ENCODE measurements at regions of chr9 and their contacts with region 1.

Region 1: GRCh38 chr9:38392235-38393127 is at the start of gene ALDH1B1:
- DNase-seq: peak; percentile 18 to 83 (median 35)
- ATAC-seq: peak; percentile 97
- H3K4me3 ChIP-seq: peak within 1 kb of the TSS; percentile 80
- H3K4me3 Mint-ChIP-seq: peak within 1 kb of the TSS; percentile 85 to 98 (median 93)
- H3K27ac ChIP-seq: peak within 1 kb of the TSS; percentile 59
- H3K27ac Mint-ChIP-seq: peak within 1 kb of the TSS; percentile 57 to 91 (median 87)
- H3K4me1 ChIP-seq: peaks cover 7% of the 10 kb centered on the region in 2 donors
- H3K4me1 Mint-ChIP-seq: peaks cover 12 to 26% (median 17%) of the 10 kb centered on the region in 7 donors
- H3K27me3 ChIP-seq: no peaks in the 10 kb centered on the region
- H3K27me3 Mint-ChIP-seq: peaks cover 0 to 23% (median 0%) of the 10 kb centered on the region in 5 donors
- total RNA-seq, gene ALDH1B1: 1.9 to 13.4 (median 3.8) TPM

Region 2: GRCh38 chr9:38227061-38227540 is 165.4 kb before region 1 on chr9:
- CTCF ChIA-PET with region 1: no interaction called
- POLR2A ChIA-PET with region 1: no interaction called
- intact Hi-C with region 1: loop called in 1 of 2 experiments (anchors 2 kb)
- DNase-seq: peak; percentile 33 to 82 (median 73)
- ATAC-seq: peak; percentile 84
- H3K4me3 ChIP-seq: peak overlapping the region; percentile 49
- H3K4me3 Mint-ChIP-seq: peak overlapping the region; percentile 76 to 90 (median 86)
- H3K27ac ChIP-seq: no peak overlapping the region
- H3K27ac Mint-ChIP-seq: peak overlapping the region in 8 of 9 donors; percentile 10 to 92 (median 58)
- H3K4me1 ChIP-seq: peaks cover 0 to 13% of the 10 kb centered on the region in 2 donors
- H3K4me1 Mint-ChIP-seq: peaks cover 16 to 30% (median 24%) of the 10 kb centered on the region in 7 donors
- H3K27me3 ChIP-seq: no peaks in the 10 kb centered on the region
- H3K27me3 Mint-ChIP-seq: peaks cover 0 to 17% (median under 1%) of the 10 kb centered on the region in 5 donors

Region 3: GRCh38 chr9:38339087-38339486 is 53.4 kb before region 1 on chr9:
- CTCF ChIA-PET with region 1: no interaction called
- POLR2A ChIA-PET with region 1: no interaction called
- intact Hi-C with region 1: loop called in 1 of 2 experiments (anchors 10 kb)
- DNase-seq: no peak
- ATAC-seq: peak; percentile 57
- H3K4me3 ChIP-seq: no peak overlapping the region
- H3K4me3 Mint-ChIP-seq: no peak overlapping the region
- H3K27ac ChIP-seq: no peak overlapping the region
- H3K27ac Mint-ChIP-seq: no peak overlapping the region
- H3K4me1 ChIP-seq: no peaks in the 10 kb centered on the region
- H3K4me1 Mint-ChIP-seq: peaks cover 0 to 8% (median 0%) of the 10 kb centered on the region in 7 donors
- H3K27me3 ChIP-seq: no peaks in the 10 kb centered on the region
- H3K27me3 Mint-ChIP-seq: peaks cover 0 to 10% (median 5%) of the 10 kb centered on the region in 5 donors